SK-N-SH (cell line): ENCODE measurements at regions of chr7 and their contacts with region 1.

Region 1: GRCh38 chr7:45591101-45591906 is 17.1 kb downstream of the ADCY1 start:
- DNase-seq: peak; percentile 64
- H3K4me3 ChIP-seq: no peak overlapping the region
- H3K27ac ChIP-seq: peak overlapping the region in 1 of 2 experiments; percentile 89; a peak in 2 of 4 replicates
- H3K4me1 ChIP-seq: peaks cover 0 to 95% of the 10 kb centered on the region in 2 experiments; a peak in 2 of 4 replicates
- H3K27me3 ChIP-seq: no peaks in the 10 kb centered on the region
- CTCF ChIP-seq: no peak
- EP300 ChIP-seq: no peak
- RAD21 ChIP-seq: no peak

Region 2: GRCh38 chr7:45324791-45325190 is 266.5 kb before region 1 on chr7:
- CTCF ChIA-PET with region 1: no interaction called
- POLR2A ChIA-PET with region 1: no interaction called
- DNase-seq: no peak
- H3K4me3 ChIP-seq: no peak overlapping the region
- H3K27ac ChIP-seq: no peak overlapping the region
- H3K4me1 ChIP-seq: no peaks in the 10 kb centered on the region
- H3K27me3 ChIP-seq: no peaks in the 10 kb centered on the region
- CTCF ChIP-seq: no peak
- EP300 ChIP-seq: no peak
- RAD21 ChIP-seq: no peak

Region 3: GRCh38 chr7:45574521-45575500 is 16.5 kb before region 1 on chr7:
- CTCF ChIA-PET with region 1: interaction called, 16 read pairs
- POLR2A ChIA-PET with region 1: no interaction called
- DNase-seq: peak; percentile 92
- H3K4me3 ChIP-seq: peak overlapping the region; percentile 37 to 58
- H3K27ac ChIP-seq: peak overlapping the region in 1 of 2 experiments; percentile 84; a peak in 2 of 4 replicates
- H3K4me1 ChIP-seq: peaks cover 0 to 58% of the 10 kb centered on the region in 2 experiments; a peak in 2 of 4 replicates
- H3K27me3 ChIP-seq: peaks cover 43% of the 10 kb centered on the region
- CTCF ChIP-seq: no peak
- EP300 ChIP-seq: no peak
- RAD21 ChIP-seq: peak; percentile 23; the same call in 1 of the 2 replicates

Region 4: DNA sequence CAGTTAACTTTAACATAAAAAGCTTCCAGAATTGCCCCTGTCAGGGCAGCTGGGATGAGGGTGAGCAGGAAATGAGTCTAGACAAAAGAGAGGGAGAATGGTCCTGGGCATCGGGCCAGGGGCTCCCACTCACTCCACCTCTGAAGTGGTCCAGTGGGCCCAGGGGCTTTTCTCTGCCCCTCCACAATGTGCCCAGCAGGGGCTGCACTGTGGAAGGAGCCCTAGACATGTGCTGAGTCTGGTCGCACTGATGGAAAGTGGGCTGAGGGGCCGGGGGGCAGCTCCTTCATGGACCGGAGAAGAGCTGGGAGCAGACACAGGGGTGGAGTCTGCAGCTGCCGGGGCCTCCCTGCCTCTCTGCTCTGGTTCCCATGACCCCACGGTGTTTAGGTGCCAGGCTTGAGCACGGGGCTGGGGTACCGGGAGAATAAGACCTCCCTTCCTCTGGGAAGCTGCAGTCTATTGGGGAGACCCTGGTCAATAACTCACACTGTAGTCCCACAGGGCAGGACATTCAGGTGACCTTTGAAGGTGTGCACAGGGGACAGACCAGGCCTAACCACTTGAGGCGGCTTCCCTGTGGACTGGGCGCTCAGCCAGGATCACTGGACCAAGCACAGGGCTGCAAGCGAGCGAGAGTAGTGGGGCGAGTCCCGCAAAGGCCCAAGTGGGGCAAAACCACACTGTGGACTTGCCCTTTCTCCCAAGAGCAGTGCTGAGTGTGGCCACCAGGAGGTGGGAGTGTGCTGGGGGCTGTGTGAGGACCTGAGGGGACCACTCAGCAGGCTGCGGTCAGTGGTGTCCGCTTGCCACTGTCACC is 11.0 kb before region 1 on chr7:
- CTCF ChIA-PET with region 1: interaction called, 16 read pairs
- POLR2A ChIA-PET with region 1: no interaction called
- DNase-seq: peak; percentile 80
- H3K4me3 ChIP-seq: no peak overlapping the region
- H3K27ac ChIP-seq: peak overlapping the region in 1 of 2 experiments; percentile 96; a peak in 2 of 4 replicates
- H3K4me1 ChIP-seq: peaks cover 0 to 88% of the 10 kb centered on the region in 2 experiments; a peak in 2 of 4 replicates
- H3K27me3 ChIP-seq: peaks cover 30% of the 10 kb centered on the region
- CTCF ChIP-seq: peak; percentile 43; the same call in 1 of the 2 replicates
- EP300 ChIP-seq: 0 out of 4 replicates have a peak, but pooled peaks of 1 of the 2 experiments have one; percentile 10
- RAD21 ChIP-seq: peak; percentile 52

Region 5: GRCh38 chr7:45689011-45689796 is 97.9 kb after region 1 on chr7:
- CTCF ChIA-PET with region 1: no interaction called
- POLR2A ChIA-PET with region 1: no interaction called
- DNase-seq: no peak
- H3K4me3 ChIP-seq: no peak overlapping the region
- H3K27ac ChIP-seq: no peak overlapping the region
- H3K4me1 ChIP-seq: peaks cover 4 to 8% of the 10 kb centered on the region in 2 experiments; a peak in 2 of 4 replicates
- H3K27me3 ChIP-seq: no peaks in the 10 kb centered on the region
- CTCF ChIP-seq: no peak
- EP300 ChIP-seq: no peak
- RAD21 ChIP-seq: no peak

Region 6: DNA sequence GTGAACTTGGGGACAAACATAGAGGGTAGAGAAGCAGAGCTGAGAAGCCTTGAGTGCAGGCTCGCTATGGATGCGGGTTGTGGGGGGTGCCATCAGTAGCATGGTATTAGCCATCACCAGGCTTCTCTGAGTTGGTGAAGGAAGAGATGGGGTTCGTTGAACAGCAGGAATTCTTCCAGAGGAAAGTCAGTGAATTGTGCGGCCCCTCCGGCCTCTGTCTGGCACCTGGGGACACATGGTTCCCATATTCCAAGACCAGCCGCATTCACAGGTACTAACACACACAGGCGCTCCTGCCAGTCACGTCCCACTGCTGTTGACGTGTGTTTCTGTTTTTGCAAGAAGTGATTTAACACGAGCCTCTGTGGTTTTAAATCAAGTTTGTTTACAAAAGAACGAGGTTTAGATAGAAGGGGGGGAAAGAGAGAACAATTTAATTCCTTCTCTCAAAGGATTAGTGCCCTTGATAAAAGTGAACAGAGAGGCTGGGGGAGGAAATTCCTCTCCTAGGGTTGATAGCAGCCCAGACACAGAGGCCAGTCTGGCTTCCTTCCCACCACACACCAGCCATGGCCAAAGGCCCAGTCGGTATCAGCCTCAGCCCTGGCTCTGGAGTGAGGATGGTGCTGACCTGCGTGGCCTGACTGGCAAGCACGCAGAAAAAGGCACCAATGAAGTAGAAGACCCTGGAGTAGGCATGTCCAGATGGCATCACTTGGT is 582.3 kb after region 1 on chr7:
- CTCF ChIA-PET with region 1: no interaction called
- POLR2A ChIA-PET with region 1: no interaction called
- DNase-seq: no peak
- H3K4me3 ChIP-seq: no peak overlapping the region
- H3K27ac ChIP-seq: no peak overlapping the region
- H3K4me1 ChIP-seq: peaks cover 0 to 17% of the 10 kb centered on the region in 2 experiments; a peak in 3 of 4 replicates
- H3K27me3 ChIP-seq: no peaks in the 10 kb centered on the region
- CTCF ChIP-seq: no peak
- EP300 ChIP-seq: no peak
- RAD21 ChIP-seq: no peak